Natural killer cell (primary cell): ENCODE measurements at regions of chr11 and their contacts with region 1.

Region 1: DNA sequence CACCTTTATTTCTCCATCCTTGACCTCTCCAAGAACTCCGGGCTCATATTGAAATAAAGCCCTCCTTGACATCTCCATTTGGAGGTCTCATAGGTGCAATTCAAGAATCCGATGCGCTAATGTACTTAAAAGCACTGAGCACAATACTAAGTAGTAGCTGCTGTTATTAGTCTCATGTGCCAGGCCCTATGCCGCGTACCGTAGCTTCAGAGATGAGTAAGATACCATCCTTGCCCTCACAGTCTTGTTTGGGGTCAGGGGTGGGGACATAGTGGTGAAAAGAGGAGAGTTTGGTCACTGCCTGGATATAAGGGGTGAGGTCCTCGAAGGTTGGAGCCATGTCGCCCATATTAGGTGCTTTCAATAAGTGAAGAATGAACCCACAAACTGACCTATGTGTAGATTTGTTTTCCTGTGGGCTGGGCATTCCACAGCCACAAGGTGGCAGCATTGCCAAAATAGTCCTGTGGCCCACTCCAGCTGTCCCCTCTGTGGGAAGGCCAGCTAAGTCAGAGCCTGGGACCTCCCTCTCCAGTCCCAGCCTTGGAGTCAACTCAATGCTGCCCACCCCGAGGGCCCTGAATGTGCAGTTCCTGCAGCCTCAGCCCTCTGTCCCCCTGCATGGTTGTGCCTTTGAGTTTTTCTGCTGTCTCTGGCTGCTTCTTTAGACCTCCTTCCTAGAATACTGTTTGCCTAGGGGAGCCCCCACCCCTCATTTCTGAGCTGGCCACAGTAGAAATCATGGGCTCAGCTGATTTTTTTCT is 6.5 kb downstream of the DCPS start:
- DNase-seq: peak; percentile 67 to 75
- ATAC-seq: peak; percentile 71 to 78 (median 75)
- H3K4me3 ChIP-seq: no peak overlapping the region
- H3K4me3 Mint-ChIP-seq: peak overlapping the region; percentile 79
- H3K27ac ChIP-seq: peak overlapping the region; percentile 7
- H3K27ac Mint-ChIP-seq: peak overlapping the region; percentile 92 to 93
- H3K4me1 ChIP-seq: peaks cover 36% of the 10 kb centered on the region
- H3K4me1 Mint-ChIP-seq: peaks cover 53 to 54% of the 10 kb centered on the region in 2 donors
- H3K27me3 ChIP-seq: no peaks in the 10 kb centered on the region
- H3K27me3 Mint-ChIP-seq: no peaks in the 10 kb centered on the region
- CTCF ChIP-seq: peak; percentile 94

Region 2: GRCh38 chr11:125995313-125995712 is 315.1 kb before region 1 on chr11:
- intact Hi-C with region 1: no loop called
- DNase-seq: no peak
- ATAC-seq: no peak
- H3K4me3 ChIP-seq: no peak overlapping the region
- H3K4me3 Mint-ChIP-seq: no peak overlapping the region
- H3K27ac ChIP-seq: no peak overlapping the region
- H3K27ac Mint-ChIP-seq: no peak overlapping the region
- H3K4me1 ChIP-seq: no peaks in the 10 kb centered on the region
- H3K4me1 Mint-ChIP-seq: no peaks in the 10 kb centered on the region
- H3K27me3 ChIP-seq: no peaks in the 10 kb centered on the region
- H3K27me3 Mint-ChIP-seq: peaks cover 3 to 36% of the 10 kb centered on the region in 2 donors
- CTCF ChIP-seq: no peak

Region 3: DNA sequence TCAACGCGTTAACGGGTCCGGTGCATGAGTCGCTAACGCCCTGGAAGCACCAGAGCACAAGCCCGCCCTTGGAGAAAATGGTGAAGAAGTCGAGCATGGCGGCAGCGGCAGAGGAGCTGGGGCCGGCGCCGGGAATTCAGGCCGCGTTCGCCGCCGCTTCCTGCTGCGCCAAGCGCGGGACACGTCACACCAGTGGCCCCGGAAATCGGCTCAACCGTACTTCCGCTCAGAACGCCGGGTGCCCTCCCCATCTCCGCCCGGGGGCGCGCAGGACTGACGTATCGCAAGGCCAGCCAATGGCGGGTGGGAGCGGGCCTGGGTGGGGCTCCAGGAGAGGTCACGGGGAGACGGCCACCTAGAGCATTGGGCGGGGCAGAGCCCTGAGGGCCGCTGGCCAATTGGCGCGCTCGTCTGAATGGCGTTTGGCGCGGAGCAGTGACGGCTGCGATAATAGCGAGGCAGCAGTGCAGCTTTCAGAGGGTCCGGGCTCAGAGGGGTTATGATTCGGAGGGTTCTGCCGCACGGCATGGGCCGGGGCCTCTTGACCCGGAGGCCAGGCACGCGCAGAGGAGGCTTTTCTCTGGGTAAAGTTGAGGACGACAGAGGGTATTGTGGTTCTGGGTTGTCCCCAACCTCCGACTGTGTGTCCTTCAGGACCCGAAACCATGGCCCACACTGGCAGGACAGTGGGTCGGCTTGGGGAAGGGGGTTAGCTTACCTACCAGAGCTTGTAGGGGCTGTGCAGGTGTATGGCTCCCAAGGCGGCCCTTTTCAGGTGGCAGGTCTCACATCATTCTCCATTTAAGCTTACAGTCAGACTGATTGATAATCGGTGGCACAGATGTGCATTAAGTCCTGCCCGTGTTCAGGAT is 41.5 kb before region 1 on chr11 and contains the starts of genes FOXRED1 and SRPRA:
- intact Hi-C with region 1: loop called (anchors 2 kb)
- DNase-seq: peak; percentile 99 to 100
- ATAC-seq: peak; percentile 97 to 100 (median 98)
- H3K4me3 ChIP-seq: peak within 1 kb of the TSS; percentile 91
- H3K4me3 Mint-ChIP-seq: peak within 1 kb of the TSS; percentile 99
- H3K27ac ChIP-seq: peak within 1 kb of the TSS; percentile 90
- H3K27ac Mint-ChIP-seq: peak within 1 kb of the TSS; percentile 95 to 96
- H3K4me1 ChIP-seq: peaks cover 16% of the 10 kb centered on the region
- H3K4me1 Mint-ChIP-seq: peaks cover 34 to 48% of the 10 kb centered on the region in 2 donors
- H3K27me3 ChIP-seq: no peaks in the 10 kb centered on the region
- H3K27me3 Mint-ChIP-seq: no peaks in the 10 kb centered on the region
- CTCF ChIP-seq: no peak
- total RNA-seq, gene FOXRED1: 31.1 to 37.9 (median 31.3) TPM
- total RNA-seq, gene SRPRA: 188 to 225 (median 195) TPM

Region 4: DNA sequence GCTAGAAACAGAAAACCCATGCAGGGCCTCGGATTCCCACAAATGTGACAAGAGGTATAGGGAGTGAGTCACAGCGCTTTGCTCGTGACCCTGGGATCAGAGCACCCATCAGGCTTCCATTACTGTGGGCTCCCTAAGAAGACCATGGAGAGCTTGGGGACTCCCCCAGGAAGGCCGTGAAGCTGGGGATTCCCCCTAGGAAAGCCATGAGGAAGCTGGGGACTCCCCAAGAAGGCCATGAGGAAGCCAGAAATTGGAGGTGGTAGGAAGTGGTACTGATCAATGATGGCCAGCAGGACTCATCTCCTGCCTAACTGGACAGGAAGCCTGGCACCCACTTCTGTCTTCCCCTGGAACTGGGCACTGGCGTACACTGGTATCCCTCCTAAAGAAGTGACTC is 16.7 kb before region 1 on chr11:
- intact Hi-C with region 1: no loop called
- DNase-seq: no peak
- ATAC-seq: no peak
- H3K4me3 ChIP-seq: no peak overlapping the region
- H3K4me3 Mint-ChIP-seq: no peak overlapping the region
- H3K27ac ChIP-seq: no peak overlapping the region
- H3K27ac Mint-ChIP-seq: peak overlapping the region in 1 of 2 donors; percentile 44
- H3K4me1 ChIP-seq: no peaks in the 10 kb centered on the region
- H3K4me1 Mint-ChIP-seq: peaks cover 7 to 11% of the 10 kb centered on the region in 2 donors
- H3K27me3 ChIP-seq: no peaks in the 10 kb centered on the region
- H3K27me3 Mint-ChIP-seq: no peaks in the 10 kb centered on the region
- CTCF ChIP-seq: no peak

Region 5: DNA sequence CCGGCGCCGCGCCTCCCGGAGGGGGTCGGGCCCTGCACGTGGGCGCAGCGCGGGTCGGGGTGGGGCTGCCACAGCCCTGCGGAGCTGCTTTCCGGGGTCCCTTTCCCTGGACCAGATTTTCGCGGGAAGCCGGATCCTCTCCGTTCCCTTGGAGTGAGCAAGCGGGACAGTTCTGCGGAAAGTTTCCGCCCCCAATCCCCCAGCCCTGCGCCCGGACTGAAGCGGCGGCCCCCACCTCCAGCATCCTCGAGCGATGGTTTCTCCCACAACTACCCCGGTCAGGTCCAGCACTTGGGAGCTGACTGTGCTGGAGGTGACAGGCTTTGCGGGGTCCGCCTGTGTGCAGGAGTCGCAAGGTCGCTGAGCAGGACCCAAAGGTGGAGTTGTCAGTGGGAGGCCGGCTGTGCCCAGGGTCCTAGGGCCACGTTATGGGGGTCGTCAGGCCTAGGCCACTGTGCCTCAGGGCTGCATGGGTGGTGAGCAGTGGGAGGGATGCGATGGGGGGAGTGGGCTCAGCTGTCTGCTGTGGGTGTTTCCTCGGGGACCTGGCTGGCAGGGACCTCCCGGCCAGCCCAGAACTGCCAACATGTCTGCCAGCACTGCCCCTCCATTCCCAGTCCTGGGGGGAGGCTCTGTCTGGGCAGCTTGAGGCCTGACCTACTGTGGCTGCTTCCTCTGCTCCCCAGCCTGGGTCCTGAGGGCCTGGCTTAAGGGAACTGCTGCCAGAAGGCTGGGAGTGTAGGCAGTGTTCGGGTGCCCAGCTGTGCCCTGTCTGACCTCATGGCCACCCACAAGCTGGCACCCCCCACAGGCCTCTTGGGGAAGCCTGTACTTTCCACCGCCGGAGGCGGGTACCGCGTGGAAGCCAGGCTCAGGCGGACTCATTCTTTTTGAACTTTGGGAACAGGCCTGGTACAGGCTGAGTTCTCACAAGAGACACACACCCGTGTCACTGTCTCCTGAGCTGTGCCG is 45.8 kb after region 1 on chr11:
- intact Hi-C with region 1: loop called (anchors 2 kb)
- DNase-seq: peak in 1 of 2 donors; percentile 37
- ATAC-seq: peak; percentile 11 to 36 (median 33)
- H3K4me3 ChIP-seq: peak overlapping the region; percentile 35
- H3K4me3 Mint-ChIP-seq: peak overlapping the region; percentile 79
- H3K27ac ChIP-seq: peak overlapping the region; percentile 37
- H3K27ac Mint-ChIP-seq: peak overlapping the region; percentile 67 to 80
- H3K4me1 ChIP-seq: peaks cover 58% of the 10 kb centered on the region
- H3K4me1 Mint-ChIP-seq: peaks cover 39 to 79% of the 10 kb centered on the region in 2 donors
- H3K27me3 ChIP-seq: no peaks in the 10 kb centered on the region
- H3K27me3 Mint-ChIP-seq: no peaks in the 10 kb centered on the region
- CTCF ChIP-seq: no peak

Region 6: GRCh38 chr11:126391970-126392639 is 81.7 kb after region 1 on chr11:
- intact Hi-C with region 1: loop called (anchors 1 kb)
- DNase-seq: peak in 1 of 2 donors; percentile 9
- ATAC-seq: peak; percentile 53 to 75 (median 64)
- H3K4me3 ChIP-seq: no peak overlapping the region
- H3K4me3 Mint-ChIP-seq: peak overlapping the region; percentile 75
- H3K27ac ChIP-seq: no peak overlapping the region
- H3K27ac Mint-ChIP-seq: peak overlapping the region; percentile 87 to 91
- H3K4me1 ChIP-seq: peaks cover 24% of the 10 kb centered on the region
- H3K4me1 Mint-ChIP-seq: peaks cover 46% of the 10 kb centered on the region in 2 donors
- H3K27me3 ChIP-seq: no peaks in the 10 kb centered on the region
- H3K27me3 Mint-ChIP-seq: no peaks in the 10 kb centered on the region
- CTCF ChIP-seq: no peak

Region 7: GRCh38 chr11:126480410-126481302 is 170.2 kb after region 1 on chr11:
- intact Hi-C with region 1: loop called (anchors 1 kb)
- DNase-seq: peak; percentile 62 to 88
- ATAC-seq: peak; percentile 91 to 99 (median 96)
- H3K4me3 ChIP-seq: no peak overlapping the region
- H3K4me3 Mint-ChIP-seq: peak overlapping the region; percentile 33
- H3K27ac ChIP-seq: peak overlapping the region; percentile 19
- H3K27ac Mint-ChIP-seq: peak overlapping the region; percentile 20 to 83
- H3K4me1 ChIP-seq: peaks cover 13% of the 10 kb centered on the region
- H3K4me1 Mint-ChIP-seq: peaks cover 11 to 18% of the 10 kb centered on the region in 2 donors
- H3K27me3 ChIP-seq: no peaks in the 10 kb centered on the region
- H3K27me3 Mint-ChIP-seq: peaks cover 0 to 3% of the 10 kb centered on the region in 2 donors
- CTCF ChIP-seq: peak; percentile 88